GM12878 (cell line): ENCODE measurements at regions of chr3 and their contacts with region 1.

Region 1: DNA sequence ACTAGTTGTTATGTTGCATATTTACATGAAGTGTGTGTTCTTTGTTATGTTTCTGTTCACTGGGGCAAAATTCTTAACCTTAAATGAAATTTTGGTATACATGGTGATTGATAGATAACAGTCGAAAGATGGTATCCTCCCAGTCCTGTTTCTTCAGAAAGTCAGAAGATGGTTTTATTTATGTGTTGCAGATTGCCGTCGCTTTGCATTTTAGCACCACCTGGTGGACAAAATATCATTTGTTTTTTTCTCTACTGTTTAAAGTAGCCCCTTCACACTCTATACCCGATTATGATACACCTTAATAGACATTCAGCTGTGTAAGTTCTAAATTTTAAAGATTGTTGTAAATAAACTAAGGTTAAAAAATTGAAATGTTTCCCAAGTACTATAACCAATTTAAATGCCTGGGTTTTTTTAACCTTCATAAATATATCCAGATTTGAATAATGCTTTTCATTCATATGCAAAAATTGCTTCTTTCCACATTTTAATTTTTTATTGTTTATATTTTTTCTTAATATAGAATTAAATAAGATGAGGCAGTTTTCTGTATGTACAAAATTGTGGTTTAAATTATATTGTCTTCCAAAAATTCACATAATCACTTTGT is 152.2 kb downstream of the ALCAM start:
- DNase-seq: peak; percentile 49
- ATAC-seq: peak; percentile 96
- H3K4me3 ChIP-seq: no peak overlapping the region
- H3K27ac ChIP-seq: no peak overlapping the region
- H3K4me1 ChIP-seq: no peaks in the 10 kb centered on the region
- H3K27me3 ChIP-seq: no peaks in the 10 kb centered on the region
- CTCF ChIP-seq: peak; percentile 44 to 67 (median 54); a peak in 5 of 6 replicates
- EP300 ChIP-seq: no peak
- POLR2A ChIP-seq: no peak
- RAD21 ChIP-seq: peak; percentile 85

Region 2: DNA sequence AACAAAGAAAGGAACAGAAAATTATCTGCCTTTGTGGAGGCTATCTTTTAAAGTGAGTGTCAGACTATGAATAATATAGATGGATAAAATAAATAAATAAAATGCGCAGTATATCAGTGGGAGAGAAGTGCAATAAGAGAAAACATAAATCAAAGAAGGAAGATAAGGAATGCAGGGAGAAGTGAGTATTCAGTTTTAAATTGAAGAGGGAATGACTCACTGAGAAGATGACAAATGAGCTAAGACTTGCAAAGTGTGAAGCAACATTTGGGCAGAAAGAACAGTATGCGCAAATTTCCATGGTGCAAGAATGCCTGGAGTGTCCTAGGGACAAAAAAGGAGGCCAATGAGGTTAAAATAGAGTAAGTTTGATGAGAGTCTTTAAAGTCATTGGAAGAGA is 1452.3 kb before region 1 on chr3:
- CTCF ChIA-PET with region 1: no interaction called
- POLR2A ChIA-PET with region 1: no interaction called
- RAD21 ChIA-PET with region 1: no interaction called
- SMC1A ChIA-PET with region 1: no interaction called
- in situ Hi-C with region 1: no loop called
- intact Hi-C with region 1: no loop called
- DNase-seq: no peak
- ATAC-seq: no peak
- H3K4me3 ChIP-seq: no peak overlapping the region
- H3K27ac ChIP-seq: no peak overlapping the region
- H3K4me1 ChIP-seq: no peaks in the 10 kb centered on the region
- H3K27me3 ChIP-seq: no peaks in the 10 kb centered on the region
- CTCF ChIP-seq: no peak
- EP300 ChIP-seq: no peak
- POLR2A ChIP-seq: no peak
- RAD21 ChIP-seq: no peak

Region 3: GRCh38 chr3:104102386-104102785 is 1416.5 kb before region 1 on chr3:
- CTCF ChIA-PET with region 1: no interaction called
- POLR2A ChIA-PET with region 1: no interaction called
- RAD21 ChIA-PET with region 1: no interaction called
- SMC1A ChIA-PET with region 1: no interaction called
- in situ Hi-C with region 1: loop called (anchors 25 kb)
- intact Hi-C with region 1: loop called (anchors 5 kb)
- DNase-seq: peak; percentile 23
- ATAC-seq: peak; percentile 95
- H3K4me3 ChIP-seq: no peak overlapping the region
- H3K27ac ChIP-seq: no peak overlapping the region
- H3K4me1 ChIP-seq: no peaks in the 10 kb centered on the region
- H3K27me3 ChIP-seq: no peaks in the 10 kb centered on the region
- CTCF ChIP-seq: peak; percentile 66 to 75 (median 73)
- EP300 ChIP-seq: no peak
- POLR2A ChIP-seq: no peak
- RAD21 ChIP-seq: peak; percentile 61

Region 4: DNA sequence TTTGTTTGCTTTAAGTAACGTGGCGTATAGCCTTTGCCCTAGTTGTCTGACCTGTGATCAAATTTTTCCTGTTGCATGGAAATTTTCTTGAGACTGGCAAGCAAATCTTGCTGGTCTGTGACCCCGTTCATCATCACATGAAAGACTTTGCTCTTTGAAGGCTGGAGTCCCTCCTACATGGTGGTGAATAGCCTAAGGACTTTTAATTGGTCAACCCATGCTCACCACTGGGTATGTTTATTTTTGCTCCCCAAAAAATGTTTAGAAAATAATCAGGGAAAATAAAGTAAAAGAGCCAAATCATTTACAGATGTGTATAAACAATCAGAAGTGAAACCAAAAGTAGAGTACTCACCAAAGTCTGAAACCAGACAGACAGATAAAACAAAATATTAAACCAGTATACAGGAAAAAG is 1227.5 kb before region 1 on chr3:
- CTCF ChIA-PET with region 1: no interaction called
- POLR2A ChIA-PET with region 1: no interaction called
- RAD21 ChIA-PET with region 1: no interaction called
- SMC1A ChIA-PET with region 1: no interaction called
- in situ Hi-C with region 1: loop called (anchors 25 kb)
- intact Hi-C with region 1: no loop called
- DNase-seq: no peak
- ATAC-seq: peak; percentile 75
- H3K4me3 ChIP-seq: peak overlapping the region; percentile 12; the same call in 1 of the 2 replicates
- H3K27ac ChIP-seq: peak overlapping the region; percentile 42; the same call in 1 of the 2 replicates
- H3K4me1 ChIP-seq: no peaks in the 10 kb centered on the region
- H3K27me3 ChIP-seq: no peaks in the 10 kb centered on the region
- CTCF ChIP-seq: no peak
- EP300 ChIP-seq: no peak
- POLR2A ChIP-seq: no peak
- RAD21 ChIP-seq: no peak

Region 5: DNA sequence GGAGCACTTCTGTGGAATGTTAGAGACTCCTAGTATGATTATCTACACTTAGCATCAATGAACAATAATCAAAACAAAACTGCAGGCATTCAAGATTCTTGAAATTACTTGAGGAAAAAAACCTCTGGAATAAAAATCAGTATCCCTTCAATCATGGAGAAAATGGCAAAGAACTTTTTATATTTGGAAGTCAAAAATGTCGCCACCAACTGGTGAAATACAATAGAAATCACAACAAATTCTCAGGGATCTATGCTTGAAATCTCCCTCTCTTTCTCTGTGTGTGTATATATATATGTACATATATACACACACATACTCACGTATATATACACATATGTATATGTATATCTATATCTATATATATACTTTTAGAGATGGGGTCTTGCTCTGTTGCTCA is 531.1 kb before region 1 on chr3:
- CTCF ChIA-PET with region 1: no interaction called
- POLR2A ChIA-PET with region 1: no interaction called
- RAD21 ChIA-PET with region 1: no interaction called
- SMC1A ChIA-PET with region 1: no interaction called
- in situ Hi-C with region 1: no loop called
- intact Hi-C with region 1: loop called (anchors 10 kb)
- DNase-seq: no peak
- ATAC-seq: no peak
- H3K4me3 ChIP-seq: no peak overlapping the region
- H3K27ac ChIP-seq: no peak overlapping the region
- H3K4me1 ChIP-seq: no peaks in the 10 kb centered on the region
- H3K27me3 ChIP-seq: no peaks in the 10 kb centered on the region
- CTCF ChIP-seq: no peak
- EP300 ChIP-seq: no peak
- POLR2A ChIP-seq: no peak
- RAD21 ChIP-seq: no peak

Region 6: GRCh38 chr3:105375750-105376511 is 143.0 kb before region 1 on chr3:
- CTCF ChIA-PET with region 1: interaction called, 71 read pairs
- POLR2A ChIA-PET with region 1: no interaction called
- RAD21 ChIA-PET with region 1: interaction called, 62 read pairs
- SMC1A ChIA-PET with region 1: interaction called, 64 read pairs
- in situ Hi-C with region 1: no loop called
- intact Hi-C with region 1: no loop called
- DNase-seq: no peak
- ATAC-seq: peak; percentile 46
- H3K4me3 ChIP-seq: peak overlapping the region; percentile 21; the same call in 1 of the 2 replicates
- H3K27ac ChIP-seq: no peak overlapping the region; the same call in 1 of the 2 replicates
- H3K4me1 ChIP-seq: peaks cover 8% of the 10 kb centered on the region; the same call in 1 of the 2 replicates
- H3K27me3 ChIP-seq: no peaks in the 10 kb centered on the region
- CTCF ChIP-seq: no peak
- EP300 ChIP-seq: peak in 1 of 2 experiments; percentile 25; a peak in 1 of 4 replicates
- POLR2A ChIP-seq: no peak
- RAD21 ChIP-seq: no peak

Region 7: GRCh38 chr3:105656651-105657504 is 138.0 kb after region 1 on chr3:
- CTCF ChIA-PET with region 1: no interaction called
- POLR2A ChIA-PET with region 1: no interaction called
- RAD21 ChIA-PET with region 1: no interaction called
- SMC1A ChIA-PET with region 1: no interaction called
- in situ Hi-C with region 1: no loop called
- intact Hi-C with region 1: no loop called
- DNase-seq: no peak
- ATAC-seq: no peak; the same call in 2 of the 3 replicates
- H3K4me3 ChIP-seq: no peak overlapping the region
- H3K27ac ChIP-seq: no peak overlapping the region
- H3K4me1 ChIP-seq: no peaks in the 10 kb centered on the region
- H3K27me3 ChIP-seq: no peaks in the 10 kb centered on the region
- CTCF ChIP-seq: no peak
- EP300 ChIP-seq: no peak
- POLR2A ChIP-seq: no peak
- RAD21 ChIP-seq: no peak

Region 8: DNA sequence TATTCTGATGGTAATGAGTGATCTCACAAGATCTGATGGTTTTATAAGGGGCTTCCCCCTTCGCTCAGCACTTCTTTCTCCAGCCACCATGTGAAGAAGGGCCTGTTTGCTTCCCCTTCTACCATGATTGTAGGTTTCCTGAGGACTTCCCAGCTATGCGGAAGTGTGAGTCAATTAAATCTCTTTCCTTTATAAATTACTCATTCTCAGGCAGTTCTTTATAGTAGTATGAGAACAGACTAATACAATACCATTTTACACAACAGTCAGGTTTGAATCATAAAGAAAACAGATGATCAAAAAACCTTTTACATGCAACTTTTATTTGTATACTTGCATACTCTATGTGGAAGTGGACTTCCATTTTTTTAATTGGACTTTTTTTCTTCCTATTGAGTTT is 396.6 kb after region 1 on chr3:
- CTCF ChIA-PET with region 1: no interaction called
- POLR2A ChIA-PET with region 1: no interaction called
- RAD21 ChIA-PET with region 1: no interaction called
- SMC1A ChIA-PET with region 1: no interaction called
- in situ Hi-C with region 1: no loop called
- intact Hi-C with region 1: no loop called
- DNase-seq: no peak
- ATAC-seq: no peak
- H3K4me3 ChIP-seq: no peak overlapping the region
- H3K27ac ChIP-seq: no peak overlapping the region
- H3K4me1 ChIP-seq: no peaks in the 10 kb centered on the region
- H3K27me3 ChIP-seq: no peaks in the 10 kb centered on the region
- CTCF ChIP-seq: no peak
- EP300 ChIP-seq: no peak
- POLR2A ChIP-seq: no peak
- RAD21 ChIP-seq: no peak

Region 9: GRCh38 chr3:105997800-105998526 is 479.1 kb after region 1 on chr3:
- CTCF ChIA-PET with region 1: no interaction called
- POLR2A ChIA-PET with region 1: no interaction called
- RAD21 ChIA-PET with region 1: no interaction called
- SMC1A ChIA-PET with region 1: no interaction called
- in situ Hi-C with region 1: no loop called
- intact Hi-C with region 1: no loop called
- DNase-seq: no peak
- ATAC-seq: no peak
- H3K4me3 ChIP-seq: no peak overlapping the region
- H3K27ac ChIP-seq: no peak overlapping the region
- H3K4me1 ChIP-seq: no peaks in the 10 kb centered on the region
- H3K27me3 ChIP-seq: no peaks in the 10 kb centered on the region
- CTCF ChIP-seq: no peak
- EP300 ChIP-seq: no peak
- POLR2A ChIP-seq: no peak
- RAD21 ChIP-seq: no peak